ENCODE measurements at regions of chr15 and their contacts with region 1.

Region 1: DNA sequence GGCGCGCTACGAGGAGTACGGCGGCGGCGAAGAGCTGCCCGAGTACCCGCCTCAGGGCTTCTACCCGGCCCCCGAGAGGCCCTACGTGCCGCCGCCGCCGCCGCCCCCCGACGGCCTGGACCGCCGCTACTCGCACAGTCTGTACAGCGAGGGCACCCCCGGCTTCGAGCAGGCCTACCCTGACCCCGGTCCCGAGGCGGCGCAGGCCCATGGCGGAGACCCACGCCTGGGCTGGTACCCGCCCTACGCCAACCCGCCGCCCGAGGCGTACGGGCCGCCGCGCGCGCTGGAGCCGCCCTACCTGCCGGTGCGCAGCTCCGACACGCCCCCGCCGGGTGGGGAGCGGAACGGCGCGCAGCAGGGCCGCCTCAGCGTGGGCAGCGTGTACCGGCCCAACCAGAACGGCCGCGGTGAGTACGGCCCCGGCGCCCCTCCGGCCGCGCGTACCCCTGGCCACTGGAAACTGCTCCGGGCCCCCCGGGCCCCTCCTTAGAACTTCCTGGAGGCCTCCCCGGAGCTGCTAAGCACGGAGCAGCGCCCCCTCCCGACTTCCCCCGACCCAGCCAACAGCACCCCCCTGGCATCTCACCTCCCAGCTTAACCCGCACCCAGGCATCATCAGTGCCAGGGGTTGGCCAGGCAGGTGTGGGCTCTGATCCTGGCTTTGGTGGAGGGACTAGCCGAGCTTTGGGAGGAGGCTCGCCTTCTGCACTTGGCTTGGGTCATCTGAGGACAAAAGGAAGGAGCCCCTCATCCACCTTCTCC is 1.4 kb downstream of the LOXL1 start:
- DNase-seq: peak; percentile 84
- ATAC-seq: peak; percentile 81
- H3K4me3 Mint-ChIP-seq: peak overlapping the region; percentile 70
- H3K27ac Mint-ChIP-seq: peak overlapping the region; percentile 68
- H3K4me1 Mint-ChIP-seq: peaks cover 39% of the 10 kb centered on the region
- H3K27me3 Mint-ChIP-seq: no peaks in the 10 kb centered on the region
- CTCF ChIP-seq: peak; percentile 95

Region 2: GRCh38 chr15:73403171-73403570 is 524.5 kb before region 1 on chr15:
- CTCF ChIA-PET with region 1: no interaction called
- POLR2A ChIA-PET with region 1: no interaction called
- intact Hi-C with region 1: no loop called
- DNase-seq: no peak
- ATAC-seq: no peak
- H3K4me3 Mint-ChIP-seq: no peak overlapping the region
- H3K27ac Mint-ChIP-seq: no peak overlapping the region
- H3K4me1 Mint-ChIP-seq: no peaks in the 10 kb centered on the region
- H3K27me3 Mint-ChIP-seq: peaks cover 6% of the 10 kb centered on the region
- CTCF ChIP-seq: no peak

Region 3: GRCh38 chr15:73897441-73898261 is 30.0 kb before region 1 on chr15:
- CTCF ChIA-PET with region 1: interaction called, 11 read pairs
- POLR2A ChIA-PET with region 1: interaction called, 3 read pairs
- intact Hi-C with region 1: no loop called
- DNase-seq: peak; percentile 74
- ATAC-seq: peak; percentile 97
- H3K4me3 Mint-ChIP-seq: no peak overlapping the region
- H3K27ac Mint-ChIP-seq: no peak overlapping the region
- H3K4me1 Mint-ChIP-seq: no peaks in the 10 kb centered on the region
- H3K27me3 Mint-ChIP-seq: no peaks in the 10 kb centered on the region
- CTCF ChIP-seq: peak; percentile 97

Region 4: GRCh38 chr15:73908030-73908821 is 19.4 kb before region 1 on chr15:
- CTCF ChIA-PET with region 1: interaction called, 18 read pairs
- POLR2A ChIA-PET with region 1: no interaction called
- intact Hi-C with region 1: no loop called
- DNase-seq: peak; percentile 91
- ATAC-seq: peak; percentile 99
- H3K4me3 Mint-ChIP-seq: no peak overlapping the region
- H3K27ac Mint-ChIP-seq: no peak overlapping the region
- H3K4me1 Mint-ChIP-seq: no peaks in the 10 kb centered on the region
- H3K27me3 Mint-ChIP-seq: no peaks in the 10 kb centered on the region
- CTCF ChIP-seq: peak; percentile 85

Region 5: GRCh38 chr15:73914145-73914544 is 13.5 kb before region 1 on chr15:
- CTCF ChIA-PET with region 1: interaction called, 14 read pairs
- POLR2A ChIA-PET with region 1: no interaction called
- intact Hi-C with region 1: no loop called
- DNase-seq: peak; percentile 20
- ATAC-seq: peak; percentile 76
- H3K4me3 Mint-ChIP-seq: no peak overlapping the region
- H3K27ac Mint-ChIP-seq: peak overlapping the region; percentile 79
- H3K4me1 Mint-ChIP-seq: peaks cover 11% of the 10 kb centered on the region
- H3K27me3 Mint-ChIP-seq: no peaks in the 10 kb centered on the region
- CTCF ChIP-seq: no peak

Region 6: GRCh38 chr15:73964736-73965093 is 37.1 kb after region 1 on chr15:
- CTCF ChIA-PET with region 1: interaction called, 12 read pairs
- POLR2A ChIA-PET with region 1: no interaction called
- intact Hi-C with region 1: no loop called
- DNase-seq: peak; percentile 96
- ATAC-seq: peak; percentile 89
- H3K4me3 Mint-ChIP-seq: peak overlapping the region; percentile 71
- H3K27ac Mint-ChIP-seq: peak overlapping the region; percentile 91
- H3K4me1 Mint-ChIP-seq: peaks cover 30% of the 10 kb centered on the region
- H3K27me3 Mint-ChIP-seq: no peaks in the 10 kb centered on the region
- CTCF ChIP-seq: peak; percentile 95

Region 7: DNA sequence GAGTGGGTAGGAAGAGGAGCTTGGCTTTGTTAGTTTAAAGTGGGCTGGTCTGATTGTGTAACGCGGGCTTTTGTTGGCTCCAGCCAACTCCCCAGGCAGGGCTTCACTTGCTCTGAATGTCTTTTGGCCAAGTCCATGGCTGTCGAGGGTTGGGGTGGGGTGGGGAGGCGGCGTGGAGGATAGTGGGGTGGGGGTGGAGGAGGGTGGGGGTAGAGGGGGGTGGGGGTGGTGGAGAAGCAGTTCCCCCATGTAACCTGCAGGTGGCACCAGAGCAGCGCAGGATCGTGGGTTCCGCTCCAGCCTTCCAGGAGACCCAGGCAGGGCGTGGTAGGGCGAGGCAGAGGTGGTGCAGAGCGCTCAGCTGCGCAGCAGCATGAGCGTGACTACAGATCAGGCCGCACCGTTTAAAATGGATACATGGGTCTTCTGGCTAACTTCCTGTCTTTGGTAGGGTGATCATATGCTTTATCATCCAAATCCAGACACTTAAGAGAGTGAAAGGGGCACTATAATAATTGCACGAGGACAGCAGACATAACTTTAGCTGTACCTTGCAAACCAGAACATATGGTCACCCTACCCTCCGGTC is 126.4 kb after region 1 on chr15:
- CTCF ChIA-PET with region 1: no interaction called
- POLR2A ChIA-PET with region 1: no interaction called
- intact Hi-C with region 1: no loop called
- DNase-seq: peak; percentile 84
- ATAC-seq: peak; percentile 100
- H3K4me3 Mint-ChIP-seq: no peak overlapping the region
- H3K27ac Mint-ChIP-seq: no peak overlapping the region
- H3K4me1 Mint-ChIP-seq: peaks cover 13% of the 10 kb centered on the region
- H3K27me3 Mint-ChIP-seq: peaks cover 2% of the 10 kb centered on the region
- CTCF ChIP-seq: peak; percentile 36